HepG2 (cell line): ENCODE measurements at regions of chr17 and their contacts with region 1.

Region 1: DNA sequence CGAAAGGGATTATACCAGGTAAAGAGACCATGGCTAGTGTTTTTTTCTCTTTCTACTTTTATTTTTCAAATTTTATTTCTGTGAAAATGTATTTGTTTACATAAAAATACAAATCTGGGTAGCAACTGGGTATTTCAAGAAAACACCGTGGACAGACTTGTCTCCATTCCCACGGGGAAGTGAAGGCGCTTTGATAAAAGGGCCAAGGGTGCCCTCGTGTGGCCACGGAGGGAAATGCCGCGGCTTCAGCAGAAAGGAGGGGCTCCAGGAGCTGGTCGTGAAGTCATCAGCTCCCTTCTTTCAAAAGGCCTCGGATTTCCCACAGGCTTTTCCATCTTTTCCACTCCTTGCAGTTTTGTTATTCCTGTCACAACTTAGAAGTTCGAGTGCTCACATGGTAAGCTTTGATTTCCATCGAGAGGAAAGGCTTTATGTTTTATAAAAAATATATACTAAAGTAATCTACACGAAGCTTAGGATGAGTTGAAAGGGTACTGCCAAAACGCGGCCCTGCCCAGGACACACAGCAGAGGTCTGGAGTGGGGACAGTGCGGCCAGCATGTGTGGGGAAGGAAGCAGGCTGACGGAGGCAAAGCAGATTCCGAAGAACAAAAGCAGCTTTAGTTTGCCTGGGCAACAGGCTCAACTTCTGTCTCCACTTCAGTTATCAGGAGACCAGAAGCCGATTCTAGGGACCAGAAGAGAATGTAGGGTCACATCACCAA is 15.3 kb upstream of the MNT start:
- DNase-seq: peak; percentile 61
- ATAC-seq: peak; percentile 74
- H3K4me3 ChIP-seq: no peak overlapping the region
- H3K27ac ChIP-seq: no peak overlapping the region
- H3K4me1 ChIP-seq: peaks cover 7% of the 10 kb centered on the region; the same call in 1 of the 2 replicates
- H3K27me3 ChIP-seq: no peaks in the 10 kb centered on the region
- CTCF ChIP-seq: peak; percentile 90
- EP300 ChIP-seq: no peak
- POLR2A ChIP-seq: no peak
- RAD21 ChIP-seq: peak; percentile 79

Region 2: GRCh38 chr17:2374549-2375277 is 41.5 kb before region 1 on chr17:
- CTCF ChIA-PET with region 1: interaction called, 4 read pairs
- POLR2A ChIA-PET with region 1: no interaction called
- in situ Hi-C with region 1: loop called (anchors 5 kb)
- intact Hi-C with region 1: no loop called
- DNase-seq: no peak
- ATAC-seq: no peak
- H3K4me3 ChIP-seq: no peak overlapping the region
- H3K27ac ChIP-seq: no peak overlapping the region
- H3K4me1 ChIP-seq: no peaks in the 10 kb centered on the region
- H3K27me3 ChIP-seq: no peaks in the 10 kb centered on the region
- CTCF ChIP-seq: no peak
- EP300 ChIP-seq: no peak
- POLR2A ChIP-seq: no peak
- RAD21 ChIP-seq: no peak

Region 3: GRCh38 chr17:2380226-2380922 is 35.8 kb before region 1 on chr17:
- CTCF ChIA-PET with region 1: interaction called, 65 read pairs
- POLR2A ChIA-PET with region 1: interaction called, 31 read pairs
- in situ Hi-C with region 1: loop called (anchors 5 kb)
- intact Hi-C with region 1: loop called (anchors 1 kb)
- DNase-seq: no peak
- ATAC-seq: no peak
- H3K4me3 ChIP-seq: no peak overlapping the region
- H3K27ac ChIP-seq: no peak overlapping the region
- H3K4me1 ChIP-seq: peaks cover 17% of the 10 kb centered on the region
- H3K27me3 ChIP-seq: no peaks in the 10 kb centered on the region
- CTCF ChIP-seq: no peak
- EP300 ChIP-seq: no peak
- POLR2A ChIP-seq: no peak
- RAD21 ChIP-seq: no peak

Region 4: DNA sequence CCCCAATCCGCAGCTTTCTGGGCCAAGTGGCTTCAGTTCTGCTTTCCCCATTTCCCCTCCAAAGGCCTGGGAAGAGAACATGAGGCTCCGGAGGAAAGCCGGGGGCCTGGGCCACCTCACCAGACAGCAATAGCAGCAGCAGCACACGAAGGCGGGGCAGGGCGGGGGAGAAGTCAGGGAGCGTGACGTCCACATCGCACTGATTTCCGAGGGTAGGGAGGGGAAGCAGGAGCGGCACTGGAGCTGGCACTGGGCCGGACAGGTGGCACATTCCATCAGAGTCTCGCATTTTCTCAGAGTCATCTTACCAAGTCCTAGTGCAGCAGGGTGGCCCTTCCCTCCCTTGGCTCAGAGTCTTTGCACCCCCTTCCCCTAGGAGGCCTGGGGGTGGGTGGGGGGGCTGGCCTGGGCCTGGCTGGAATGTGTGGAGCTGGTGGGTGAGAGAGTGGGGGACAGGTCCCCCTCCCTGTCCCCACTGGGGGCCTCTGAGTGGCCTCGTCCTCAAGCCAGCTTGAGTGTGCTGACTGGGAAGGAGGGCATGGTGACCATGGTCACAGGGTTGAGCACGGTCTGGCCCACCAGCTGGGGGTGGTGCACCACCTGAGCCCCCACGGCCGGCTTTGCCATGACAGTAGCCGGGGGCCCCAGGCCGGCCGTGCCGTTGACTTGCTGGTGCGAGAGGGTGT is 29.6 kb before region 1 on chr17:
- CTCF ChIA-PET with region 1: interaction called, 65 read pairs
- POLR2A ChIA-PET with region 1: interaction called, 31 read pairs
- in situ Hi-C with region 1: no loop called
- intact Hi-C with region 1: loop called (anchors 1 kb)
- DNase-seq: no peak
- ATAC-seq: no peak
- H3K4me3 ChIP-seq: no peak overlapping the region
- H3K27ac ChIP-seq: no peak overlapping the region
- H3K4me1 ChIP-seq: peaks cover 33% of the 10 kb centered on the region
- H3K27me3 ChIP-seq: no peaks in the 10 kb centered on the region
- CTCF ChIP-seq: no peak
- EP300 ChIP-seq: no peak
- POLR2A ChIP-seq: no peak
- RAD21 ChIP-seq: no peak